WTC11 (cell line): ENCODE measurements at regions of chr2 and their contacts with region 1.

Region 1: DNA sequence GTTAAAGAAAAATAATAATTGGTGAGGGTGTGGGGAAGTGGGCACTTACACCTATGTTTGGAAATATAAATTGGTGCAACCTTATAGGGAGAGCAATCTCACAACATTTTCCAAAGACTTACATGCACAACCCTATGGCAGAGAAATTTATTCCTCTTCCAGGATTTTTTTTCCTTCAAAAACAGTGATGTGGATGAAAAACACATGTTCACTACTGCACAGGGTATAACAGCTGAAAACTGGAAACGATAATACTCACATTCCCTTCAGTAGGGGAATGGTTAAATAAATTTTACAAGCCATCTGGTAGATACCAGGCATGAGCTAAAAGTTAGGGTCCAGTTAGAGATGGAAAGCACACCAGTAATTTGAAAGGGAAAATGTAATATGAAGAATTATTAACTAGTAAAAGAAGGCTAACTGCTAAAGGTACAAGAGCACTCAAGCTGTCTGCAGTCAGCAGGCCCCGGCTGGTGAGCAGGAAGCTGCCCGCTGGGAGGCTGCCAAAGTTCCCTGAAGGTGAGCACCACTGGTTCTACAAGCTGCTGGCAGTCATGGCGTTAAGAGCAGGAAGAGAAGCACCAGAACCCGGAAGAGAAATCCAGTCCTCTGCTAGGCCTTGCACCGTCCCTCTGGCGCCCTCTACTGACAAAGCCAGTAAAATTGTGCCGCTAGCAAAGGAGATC is 28.4 kb upstream of the CASP8 start:
- DNase-seq: peak; percentile 89
- ATAC-seq: peak; percentile 82
- H3K4me3 Mint-ChIP-seq: no peak overlapping the region
- H3K27ac Mint-ChIP-seq: no peak overlapping the region
- H3K4me1 Mint-ChIP-seq: peaks cover 20% of the 10 kb centered on the region
- H3K27me3 Mint-ChIP-seq: peaks cover 4% of the 10 kb centered on the region; the same call in 1 of the 2 replicates
- CTCF ChIP-seq: peak; percentile 76

Region 2: DNA sequence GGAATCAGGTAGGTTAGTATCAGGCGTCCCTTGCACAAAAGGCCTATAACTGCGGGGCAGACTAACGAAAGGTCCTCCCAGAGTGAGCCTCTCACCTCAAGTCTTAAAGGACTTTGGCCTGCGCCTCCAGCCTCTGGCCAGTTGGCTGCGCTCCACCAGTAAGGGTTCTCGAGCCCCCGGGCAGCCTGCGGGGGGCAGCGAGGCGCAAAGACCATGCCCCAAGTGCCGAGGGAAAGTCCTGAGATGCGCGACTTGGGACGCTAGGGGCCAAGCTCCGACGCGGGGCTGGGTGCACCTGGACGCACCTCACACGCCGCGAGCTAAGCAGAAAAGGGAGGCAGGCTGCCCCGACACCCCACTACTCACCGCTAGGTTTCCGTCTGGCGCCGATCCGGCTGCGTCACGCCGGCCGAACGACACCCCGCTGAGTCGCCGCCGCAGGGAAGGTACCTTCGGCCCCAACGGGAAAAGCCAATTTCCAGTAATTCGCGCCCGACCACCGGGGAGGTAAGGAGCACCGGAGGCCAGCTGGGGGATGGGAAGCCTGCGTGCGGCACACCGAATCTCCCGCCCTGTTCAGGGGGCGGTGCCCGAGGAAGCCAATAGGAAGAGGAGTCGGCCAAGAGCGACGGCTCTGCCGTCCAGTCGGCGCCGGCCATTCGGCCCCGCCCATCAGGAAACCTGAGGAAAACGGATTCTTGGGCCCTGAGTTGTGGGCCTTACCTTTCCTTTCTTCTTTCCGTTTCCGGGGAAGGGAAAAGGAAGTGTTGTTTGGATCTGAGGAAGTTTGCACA is 268.6 kb before region 1 on chr2 and contains the start of gene ORC2:
- CTCF ChIA-PET with region 1: interaction called, 13 read pairs
- POLR2A ChIA-PET with region 1: interaction called, 7 read pairs
- DNase-seq: peak; percentile 96
- ATAC-seq: peak; percentile 95
- H3K4me3 Mint-ChIP-seq: peak within 1 kb of the TSS; percentile 98
- H3K27ac Mint-ChIP-seq: peak within 1 kb of the TSS; percentile 98
- H3K4me1 Mint-ChIP-seq: peaks cover 30% of the 10 kb centered on the region
- H3K27me3 Mint-ChIP-seq: no peaks in the 10 kb centered on the region
- CTCF ChIP-seq: 0 out of 2 replicates have a peak, but pooled peaks have one; percentile 22
- total RNA-seq, gene ORC2: 54.9 to 57.9 TPM (median 56.0 TPM) in 3 replicates

Region 3: GRCh38 chr2:201118121-201118960 is 113.6 kb before region 1 on chr2:
- CTCF ChIA-PET with region 1: interaction called, 11 read pairs
- POLR2A ChIA-PET with region 1: no interaction called
- DNase-seq: peak; percentile 76
- ATAC-seq: peak; percentile 49
- H3K4me3 Mint-ChIP-seq: peak overlapping the region; percentile 88
- H3K27ac Mint-ChIP-seq: peak overlapping the region; percentile 95
- H3K4me1 Mint-ChIP-seq: peaks cover 43% of the 10 kb centered on the region
- H3K27me3 Mint-ChIP-seq: peaks cover 4% of the 10 kb centered on the region; the same call in 1 of the 2 replicates
- CTCF ChIP-seq: no peak

Region 4: DNA sequence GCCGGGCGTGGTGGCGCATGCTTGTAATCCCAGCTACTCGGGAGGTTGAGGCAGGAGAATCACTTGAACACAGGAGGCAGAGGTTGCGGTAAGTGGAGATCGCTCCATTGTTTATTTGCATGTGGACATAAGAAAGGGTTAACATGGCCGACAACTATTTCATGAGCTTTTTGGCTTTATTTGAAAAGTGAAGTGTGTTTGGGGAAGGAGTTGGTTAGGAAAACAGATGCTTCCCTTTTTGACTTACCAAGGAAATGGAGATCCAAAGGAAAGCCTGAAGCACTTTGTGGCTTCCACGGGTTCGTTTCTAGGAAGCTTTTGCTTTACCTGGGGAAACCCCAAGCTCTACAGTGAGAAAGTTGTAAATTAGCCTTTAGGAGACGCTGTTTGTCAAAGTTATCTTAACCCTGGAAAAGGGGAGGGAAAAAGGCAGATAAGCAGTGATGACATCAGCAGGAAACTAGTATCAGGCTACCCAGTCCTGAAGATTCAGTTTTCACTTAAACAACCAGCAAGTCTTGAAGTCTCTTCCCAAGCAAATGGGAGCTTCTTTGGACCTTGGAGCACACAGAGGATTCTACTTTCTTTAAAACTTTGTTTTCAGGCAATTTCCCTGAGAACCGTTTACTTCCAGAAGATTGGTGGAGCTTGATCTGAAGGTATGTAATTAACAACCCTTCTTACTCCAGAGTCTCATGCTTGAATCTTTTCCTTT is 49.1 kb before region 1 on chr2 and contains the start of gene CASP10:
- CTCF ChIA-PET with region 1: interaction called, 78 read pairs
- POLR2A ChIA-PET with region 1: interaction called, 3 read pairs
- DNase-seq: no peak
- ATAC-seq: peak; percentile 94
- H3K4me3 Mint-ChIP-seq: peak within 1 kb of the TSS; percentile 64
- H3K27ac Mint-ChIP-seq: peak within 1 kb of the TSS; percentile 90
- H3K4me1 Mint-ChIP-seq: peaks cover 15% of the 10 kb centered on the region
- H3K27me3 Mint-ChIP-seq: no peaks in the 10 kb centered on the region; the same call in none of the 2 replicates
- CTCF ChIP-seq: no peak
- total RNA-seq, gene CASP10: 2.8 to 2.9 TPM (median 2.8 TPM) in 3 replicates

Region 5: GRCh38 chr2:201220102-201220570 is 11.8 kb before region 1 on chr2:
- CTCF ChIA-PET with region 1: interaction called, 66 read pairs
- POLR2A ChIA-PET with region 1: interaction called, 4 read pairs
- DNase-seq: no peak
- ATAC-seq: peak; percentile 36; the same call in 1 of the 2 replicates
- H3K4me3 Mint-ChIP-seq: no peak overlapping the region
- H3K27ac Mint-ChIP-seq: no peak overlapping the region
- H3K4me1 Mint-ChIP-seq: peaks cover 26% of the 10 kb centered on the region
- H3K27me3 Mint-ChIP-seq: no peaks in the 10 kb centered on the region; the same call in 1 of the 2 replicates
- CTCF ChIP-seq: no peak

Region 6: GRCh38 chr2:201254081-201254730 is 22.3 kb after region 1 on chr2:
- CTCF ChIA-PET with region 1: interaction called, 15 read pairs
- POLR2A ChIA-PET with region 1: no interaction called
- DNase-seq: peak; percentile 50
- ATAC-seq: peak; percentile 92
- H3K4me3 Mint-ChIP-seq: no peak overlapping the region
- H3K27ac Mint-ChIP-seq: peak overlapping the region; percentile 47; the same call in 1 of the 2 replicates
- H3K4me1 Mint-ChIP-seq: peaks cover 27% of the 10 kb centered on the region
- H3K27me3 Mint-ChIP-seq: no peaks in the 10 kb centered on the region
- CTCF ChIP-seq: no peak

Region 7: DNA sequence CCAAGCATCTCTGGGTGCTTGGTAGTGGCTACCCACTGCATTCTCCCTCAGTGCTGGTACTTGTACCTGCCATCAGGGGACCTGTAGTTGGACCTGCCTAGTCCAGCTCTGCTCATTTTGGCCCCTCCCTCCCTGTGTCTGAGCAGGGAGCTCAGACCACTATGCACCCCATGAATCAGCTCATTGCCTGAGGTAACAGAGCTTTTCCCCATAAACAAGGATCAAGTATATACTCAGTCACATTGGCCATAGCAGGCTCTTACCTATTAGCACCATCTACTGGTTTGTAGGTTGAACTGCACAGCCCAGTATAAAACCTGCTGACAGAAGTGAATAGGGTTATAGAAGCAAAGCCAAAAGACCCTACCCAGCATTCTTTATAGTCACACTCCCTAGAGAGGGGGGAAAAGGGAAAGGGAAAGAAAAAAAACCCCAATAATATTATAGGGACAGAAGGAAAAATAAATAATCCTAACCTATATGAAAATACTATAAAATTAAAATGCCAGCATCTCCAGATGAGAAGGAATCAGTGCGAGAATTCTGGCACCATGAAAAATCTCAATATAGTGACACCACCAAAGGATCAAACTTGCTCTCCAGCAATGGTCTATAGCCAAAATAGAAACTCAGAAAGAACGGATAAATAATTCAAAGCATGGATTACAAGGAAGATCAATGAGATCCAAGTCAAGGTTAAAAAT is 132.1 kb after region 1 on chr2:
- CTCF ChIA-PET with region 1: interaction called, 26 read pairs
- POLR2A ChIA-PET with region 1: no interaction called
- DNase-seq: no peak
- ATAC-seq: peak; percentile 99
- H3K4me3 Mint-ChIP-seq: no peak overlapping the region
- H3K27ac Mint-ChIP-seq: no peak overlapping the region
- H3K4me1 Mint-ChIP-seq: no peaks in the 10 kb centered on the region
- H3K27me3 Mint-ChIP-seq: no peaks in the 10 kb centered on the region
- CTCF ChIP-seq: peak; percentile 72